Colonic mucosa (tissue), 4 donors: ENCODE measurements at regions of chr2 and their contacts with region 1.

Region 1: DNA sequence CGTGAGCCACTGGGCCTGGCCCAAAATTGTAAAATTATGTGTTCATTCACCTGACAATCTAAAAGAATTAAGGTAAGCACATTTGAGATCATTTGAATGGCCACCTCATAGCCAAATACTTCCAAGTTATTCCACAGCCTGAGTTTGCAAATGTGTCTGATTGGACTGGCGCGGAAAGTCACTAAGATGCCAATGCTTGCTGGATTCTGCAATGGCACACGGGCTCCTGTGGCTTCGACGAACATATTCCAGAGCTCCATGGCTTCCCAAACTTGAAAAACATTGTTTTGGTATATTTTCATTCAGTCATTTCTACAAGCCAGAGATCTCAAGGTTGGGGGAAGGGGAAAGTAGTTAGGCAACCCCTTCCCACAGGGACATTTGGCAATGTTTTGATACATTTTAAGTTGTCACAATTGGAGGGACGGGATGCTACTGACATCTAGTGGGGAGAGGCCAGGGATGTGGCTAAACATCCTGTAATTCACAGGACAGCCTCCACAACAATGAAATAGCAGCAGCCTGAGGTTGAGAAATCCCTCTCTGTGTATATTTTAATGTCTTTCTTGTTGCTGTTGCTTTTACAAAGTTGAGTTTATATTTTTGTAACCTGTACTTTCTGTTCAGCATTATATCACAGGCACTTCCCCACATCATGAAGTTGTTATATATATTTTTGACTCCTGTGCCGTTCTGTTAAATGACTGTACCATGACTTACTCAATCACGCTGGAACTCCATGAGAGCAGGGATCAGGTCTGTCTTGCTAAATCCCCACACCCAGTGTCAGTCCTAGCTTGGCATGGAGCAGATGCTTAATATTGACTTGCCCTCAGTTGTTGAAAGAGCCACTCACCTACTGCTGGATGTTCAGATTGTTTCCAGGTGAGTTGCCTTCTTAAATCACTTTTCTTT is 56.9 kb downstream of the COL4A4 start:
- DNase-seq: peak; percentile 55
- H3K4me3 ChIP-seq: no peak overlapping the region
- H3K27ac ChIP-seq: no peak overlapping the region
- H3K4me1 ChIP-seq: no peaks in the 10 kb centered on the region
- H3K27me3 ChIP-seq: no peaks in the 10 kb centered on the region
- CTCF ChIP-seq: peak; percentile 68

Region 2: GRCh38 chr2:225668606-225669266 is 1438.4 kb before region 1 on chr2:
- intact Hi-C with region 1: loop called (anchors 5 kb)
- DNase-seq: peak; percentile 22
- H3K4me3 ChIP-seq: no peak overlapping the region
- H3K27ac ChIP-seq: no peak overlapping the region
- H3K4me1 ChIP-seq: no peaks in the 10 kb centered on the region
- H3K27me3 ChIP-seq: no peaks in the 10 kb centered on the region
- CTCF ChIP-seq: peak; percentile 74

Region 3: GRCh38 chr2:227033471-227034148 is 73.5 kb before region 1 on chr2:
- intact Hi-C with region 1: loop called (anchors 2 kb)
- DNase-seq: peak; percentile 70
- H3K4me3 ChIP-seq: no peak overlapping the region
- H3K27ac ChIP-seq: no peak overlapping the region
- H3K4me1 ChIP-seq: no peaks in the 10 kb centered on the region
- H3K27me3 ChIP-seq: no peaks in the 10 kb centered on the region
- CTCF ChIP-seq: peak; percentile 61